ENCODE measurements at regions of chr1 and their contacts with region 1.

Region 1: DNA sequence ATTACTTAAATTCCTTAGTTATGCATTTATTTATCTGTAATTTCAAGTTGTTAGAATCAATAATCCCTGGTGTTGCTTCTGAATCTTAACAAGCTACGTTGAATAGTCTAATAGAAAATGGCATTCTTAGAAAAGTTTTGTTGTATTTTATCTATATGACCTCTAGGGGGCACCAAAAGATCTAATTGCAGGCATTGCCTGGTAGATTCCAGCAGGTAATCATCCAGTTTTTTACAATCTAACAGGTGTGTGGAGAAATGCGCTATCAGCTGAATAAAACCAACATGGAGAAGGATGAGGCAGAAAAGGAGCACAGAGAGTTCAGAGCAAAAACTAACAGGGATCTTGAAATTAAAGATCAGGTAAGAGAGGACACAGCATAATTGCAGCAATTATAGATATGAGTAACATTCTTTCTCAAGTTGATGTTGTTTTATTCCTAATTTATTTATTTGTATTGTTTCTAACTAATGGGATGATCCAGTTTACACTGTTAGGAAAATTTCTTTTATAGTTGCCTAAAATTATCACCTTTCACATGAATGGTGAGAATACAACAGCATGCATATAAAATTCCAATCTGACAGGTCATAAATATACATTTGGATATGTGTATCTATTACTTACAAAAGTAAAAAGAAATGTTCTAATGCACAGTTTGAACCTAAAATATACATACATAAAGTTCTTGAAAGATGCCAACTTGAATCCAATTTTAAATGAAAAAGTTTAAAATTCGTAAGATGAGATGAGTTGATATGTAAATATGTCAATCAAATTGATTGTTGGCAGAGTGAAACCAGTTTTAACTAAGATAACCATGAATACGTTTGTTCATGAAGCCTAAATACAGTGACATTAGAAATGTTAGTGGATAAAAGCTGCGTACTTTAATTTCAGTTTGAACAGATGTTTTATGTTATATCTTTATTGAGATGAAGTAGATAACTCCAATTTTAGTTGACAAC is 88.4 kb downstream of the SDCCAG8 start:
- DNase-seq: no peak
- ATAC-seq: no peak
- H3K4me3 ChIP-seq: no peak overlapping the region
- H3K27ac ChIP-seq: no peak overlapping the region
- H3K4me1 ChIP-seq: peaks cover 0 to 9% (median 0%) of the 10 kb centered on the region in 12 donors
- H3K27me3 ChIP-seq: no peaks in the 10 kb centered on the region
- CTCF ChIP-seq: peak; percentile 61 to 84 (median 80)
- POLR2A ChIP-seq: no peak

Region 2: GRCh38 chr1:243287652-243288051 is 56.6 kb before region 1 on chr1:
- intact Hi-C with region 1: no loop called
- DNase-seq: no peak
- ATAC-seq: peak; percentile 55 to 93 (median 88)
- H3K4me3 ChIP-seq: no peak overlapping the region
- H3K27ac ChIP-seq: peak overlapping the region in 8 of 12 donors; percentile 11 to 93 (median 56)
- H3K4me1 ChIP-seq: peaks cover 0 to 50% (median 4%) of the 10 kb centered on the region in 12 donors
- H3K27me3 ChIP-seq: no peaks in the 10 kb centered on the region
- CTCF ChIP-seq: no peak
- POLR2A ChIP-seq: no peak

Region 3: DNA sequence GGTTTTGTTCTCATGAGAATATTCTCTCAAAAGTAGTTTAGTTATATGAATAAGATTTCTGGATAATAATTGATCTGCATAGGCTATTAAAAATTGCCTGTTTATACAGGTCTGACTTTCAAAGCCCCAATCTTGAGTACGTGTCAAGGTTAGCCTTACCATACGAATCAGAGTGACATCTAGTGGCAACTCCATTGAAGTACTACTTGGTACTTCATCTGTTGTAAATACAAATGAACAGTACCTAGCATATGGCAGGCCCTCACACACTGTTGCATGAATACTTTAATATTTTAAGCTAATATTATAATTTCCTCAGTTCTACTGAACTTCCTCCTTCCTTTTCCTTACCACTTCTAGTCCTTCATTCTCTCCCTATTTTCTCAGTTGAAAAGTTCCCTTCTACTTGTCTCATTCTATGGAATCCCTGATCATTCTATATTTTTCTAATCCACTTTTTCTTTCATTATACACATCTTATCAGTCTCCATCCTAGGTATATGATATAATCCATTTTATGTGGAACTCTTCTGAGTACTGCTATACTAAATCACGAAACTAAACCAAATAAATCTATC is 404.5 kb after region 1 on chr1:
- intact Hi-C with region 1: loop called (anchors 2 to 10 kb)
- DNase-seq: peak in 1 of 5 donors; percentile 24
- ATAC-seq: peak; percentile 78 to 91 (median 88)
- H3K4me3 ChIP-seq: no peak overlapping the region
- H3K27ac ChIP-seq: no peak overlapping the region
- H3K4me1 ChIP-seq: peaks cover 0 to 24% (median 6%) of the 10 kb centered on the region in 12 donors
- H3K27me3 ChIP-seq: no peaks in the 10 kb centered on the region
- CTCF ChIP-seq: peak; percentile 67 to 88 (median 82)
- POLR2A ChIP-seq: no peak

Region 4: DNA sequence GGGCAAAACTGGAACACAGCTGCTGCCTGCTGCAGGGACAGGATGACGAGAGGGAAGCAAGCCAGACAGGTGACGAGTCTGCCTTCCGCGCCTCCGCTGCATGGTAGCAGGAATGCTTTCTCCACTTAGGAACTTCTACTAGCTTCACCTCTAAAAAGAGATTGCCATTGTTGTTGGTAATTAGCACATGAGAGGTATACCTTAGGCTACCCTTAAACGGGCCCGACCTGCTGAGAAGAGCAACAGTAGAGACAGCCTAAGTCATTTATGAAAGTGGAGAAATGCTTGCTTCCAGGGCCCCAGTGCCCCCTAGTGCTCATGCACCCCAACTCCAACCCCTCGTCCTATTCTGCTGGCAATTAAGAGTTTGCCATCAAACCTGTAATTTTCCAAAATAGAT is 602.7 kb after region 1 on chr1:
- intact Hi-C with region 1: loop called in 1 of 10 experiments (anchors 10 kb)
- DNase-seq: no peak
- ATAC-seq: peak in 2 of 4 donors; percentile 45 to 55
- H3K4me3 ChIP-seq: no peak overlapping the region
- H3K27ac ChIP-seq: no peak overlapping the region
- H3K4me1 ChIP-seq: peaks cover 0 to 3% (median 0%) of the 10 kb centered on the region in 12 donors
- H3K27me3 ChIP-seq: no peaks in the 10 kb centered on the region
- CTCF ChIP-seq: peak in 11 of 12 donors; percentile 22 to 55 (median 41)
- POLR2A ChIP-seq: no peak

Region 5: GRCh38 chr1:244291236-244292201 is 947.3 kb after region 1 on chr1:
- intact Hi-C with region 1: loop called in 1 of 10 experiments (anchors 5 kb)
- DNase-seq: no peak
- ATAC-seq: no peak
- H3K4me3 ChIP-seq: no peak overlapping the region
- H3K27ac ChIP-seq: no peak overlapping the region
- H3K4me1 ChIP-seq: no peaks in the 10 kb centered on the region
- H3K27me3 ChIP-seq: no peaks in the 10 kb centered on the region
- CTCF ChIP-seq: no peak
- POLR2A ChIP-seq: no peak

Region 6: DNA sequence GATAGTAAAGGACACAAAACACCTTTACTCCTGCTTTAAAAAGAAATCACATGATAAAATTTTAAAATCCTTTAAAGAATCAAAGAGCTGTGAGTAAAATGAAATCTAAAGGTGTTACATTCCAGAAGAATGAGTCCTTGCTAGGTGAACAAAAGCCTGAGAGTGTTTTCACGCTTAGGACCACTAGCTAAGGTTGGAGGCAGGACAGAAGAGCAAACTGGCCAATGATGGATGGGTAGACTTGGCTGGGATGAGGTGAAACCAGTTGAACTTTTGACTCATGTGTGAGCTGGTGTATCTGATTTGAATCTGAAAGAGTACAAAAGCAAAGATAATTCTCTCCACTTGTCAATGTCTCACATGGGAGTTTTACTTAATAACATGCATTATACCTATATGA is 1151.9 kb after region 1 on chr1:
- intact Hi-C with region 1: no loop called
- DNase-seq: no peak
- ATAC-seq: no peak
- H3K4me3 ChIP-seq: no peak overlapping the region
- H3K27ac ChIP-seq: no peak overlapping the region
- H3K4me1 ChIP-seq: no peaks in the 10 kb centered on the region
- H3K27me3 ChIP-seq: no peaks in the 10 kb centered on the region
- CTCF ChIP-seq: no peak
- POLR2A ChIP-seq: no peak